ENCODE measurements at regions of chr17 and their contacts with region 1.

Region 1: GRCh38 chr17:17356149-17356930 is 53.2 kb downstream of the NT5M start:
- DNase-seq: peak; percentile 92

Region 2: DNA sequence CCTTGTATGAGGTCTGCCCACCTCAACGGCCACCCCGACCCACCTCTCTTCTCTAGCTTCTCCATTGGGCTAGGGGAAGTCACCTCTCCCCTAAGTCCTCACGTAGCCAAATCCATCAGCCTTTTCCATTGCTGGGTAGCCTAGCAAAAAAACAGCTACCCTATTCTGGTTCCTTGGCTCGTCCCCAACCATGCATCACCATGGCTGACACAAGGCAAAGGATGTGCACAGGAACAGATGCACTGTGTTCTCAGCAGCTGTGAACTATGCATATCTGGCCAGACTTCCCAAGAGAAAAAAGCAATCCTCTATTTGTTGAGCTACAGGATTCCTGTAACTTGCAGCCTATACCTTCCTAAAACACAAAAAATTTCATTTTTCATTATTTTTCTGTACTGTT is 97.3 kb before region 1 on chr17:
- in situ Hi-C with region 1: no loop called
- DNase-seq: no peak

Region 3: GRCh38 chr17:17445925-17446665 is 89.8 kb after region 1 on chr17:
- in situ Hi-C with region 1: no loop called
- DNase-seq: peak; percentile 57

Region 4: DNA sequence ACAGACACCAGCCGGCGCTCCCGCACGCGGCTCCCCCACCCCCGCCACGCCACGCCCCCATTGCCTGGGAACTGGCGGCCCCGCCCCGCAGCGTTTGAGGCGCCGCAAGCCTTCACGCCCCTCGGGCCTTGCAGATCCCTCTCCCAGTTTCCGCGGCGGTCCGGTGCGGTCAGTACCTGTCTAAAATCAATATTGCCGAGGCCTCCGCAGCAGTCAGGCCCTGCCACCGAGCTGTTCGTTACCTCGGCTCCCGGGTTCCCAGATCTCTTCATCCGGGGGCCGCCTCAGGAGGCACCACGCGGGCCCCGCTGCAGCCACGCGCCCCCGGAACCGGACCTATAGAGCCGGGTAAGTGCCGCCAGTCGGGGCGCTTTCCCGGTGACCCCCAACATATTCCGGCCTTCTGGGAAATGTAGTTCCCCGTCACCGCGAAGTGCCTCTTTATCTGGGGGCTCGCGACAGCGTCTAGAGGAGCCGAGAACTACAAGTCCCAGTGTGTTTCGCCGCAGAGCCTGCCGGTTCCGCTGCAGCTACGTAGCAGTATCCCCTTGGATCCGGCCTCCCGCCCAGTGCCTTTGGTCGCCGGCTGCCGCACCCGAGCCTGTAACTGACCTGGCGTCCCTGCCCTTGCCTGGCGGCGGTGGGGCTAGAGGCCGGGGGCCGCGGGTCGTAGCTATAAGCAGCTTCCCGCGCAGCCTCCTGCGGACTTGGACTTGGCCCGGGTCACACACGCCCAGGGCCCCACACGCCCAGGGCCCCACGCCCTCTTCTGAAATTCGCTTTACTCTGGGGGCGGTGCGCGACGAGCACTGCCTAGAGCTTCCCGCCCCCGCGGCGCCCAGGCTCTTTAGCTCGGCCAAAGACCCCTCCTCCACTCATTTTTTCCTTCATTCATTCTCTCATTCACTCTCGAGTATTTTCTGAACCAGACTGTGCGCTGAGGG is 235.3 kb after region 1 on chr17 and contains the start of gene PEMT:
- in situ Hi-C with region 1: loop called (anchors 25 kb)
- DNase-seq: peak; percentile 98
- total RNA-seq, gene PEMT: 98.3 and 100 TPM in 2 replicates